CD4-positive, alpha-beta T cell (primary cell): ENCODE measurements at regions of chr6 and their contacts with region 1.

Region 1: DNA sequence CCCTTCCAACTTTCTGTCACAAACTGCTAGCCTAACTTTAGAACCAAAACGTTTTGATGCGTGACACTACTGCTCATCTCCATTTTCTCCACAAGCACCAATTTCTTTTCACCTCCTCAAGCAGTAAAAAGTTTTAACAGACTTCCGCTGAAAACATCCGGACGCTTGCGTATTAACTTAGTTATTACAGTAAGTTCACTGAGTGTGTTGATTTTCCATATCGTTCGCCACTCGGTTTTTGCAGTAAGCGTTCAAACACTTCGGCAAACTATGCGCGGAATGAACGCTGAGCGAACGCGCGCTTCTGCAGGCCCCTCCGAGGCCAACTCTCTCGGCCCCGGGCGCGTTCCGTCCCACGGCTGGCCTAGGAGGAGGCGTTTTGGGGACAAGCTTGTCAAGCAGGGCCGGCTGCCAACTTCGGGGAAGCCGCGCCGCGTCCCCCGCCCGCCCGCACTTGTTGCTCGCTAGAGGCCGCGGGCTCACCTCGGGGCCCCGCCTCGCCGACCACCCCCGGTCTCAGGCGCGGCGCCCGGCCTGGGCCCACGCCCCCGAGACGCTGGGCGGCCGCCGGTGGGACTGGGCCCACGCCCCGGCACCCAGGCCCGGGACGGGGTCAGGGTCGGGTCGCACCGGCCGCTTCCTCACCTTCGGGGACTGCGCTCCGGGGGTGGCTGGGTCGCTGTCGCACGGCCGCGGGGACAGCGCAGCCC is 945 bp downstream of the PHF10 start:
- DNase-seq: peak; percentile 47 to 85 (median 64)
- ATAC-seq: peak; percentile 38
- H3K4me3 ChIP-seq: peak overlapping the region; percentile 79
- H3K4me3 Mint-ChIP-seq: peak overlapping the region; percentile 90
- H3K27ac ChIP-seq: peak overlapping the region; percentile 66 to 81
- H3K27ac Mint-ChIP-seq: peak overlapping the region; percentile 94
- H3K4me1 ChIP-seq: peaks cover 17% of the 10 kb centered on the region
- H3K4me1 Mint-ChIP-seq: peaks cover 58% of the 10 kb centered on the region
- H3K27me3 ChIP-seq: no peaks in the 10 kb centered on the region
- H3K27me3 Mint-ChIP-seq: no peaks in the 10 kb centered on the region
- CTCF ChIP-seq: no peak

Region 2: GRCh38 chr6:169709293-169709692 is 14.1 kb before region 1 on chr6:
- CTCF ChIA-PET with region 1: interaction called, 29 read pairs
- POLR2A ChIA-PET with region 1: interaction called, 230 read pairs
- intact Hi-C with region 1: no loop called
- DNase-seq: no peak
- ATAC-seq: no peak
- H3K4me3 ChIP-seq: no peak overlapping the region
- H3K4me3 Mint-ChIP-seq: no peak overlapping the region
- H3K27ac ChIP-seq: peak overlapping the region in 1 of 2 donors; percentile 6
- H3K27ac Mint-ChIP-seq: no peak overlapping the region
- H3K4me1 ChIP-seq: no peaks in the 10 kb centered on the region
- H3K4me1 Mint-ChIP-seq: peaks cover 34% of the 10 kb centered on the region
- H3K27me3 ChIP-seq: no peaks in the 10 kb centered on the region
- H3K27me3 Mint-ChIP-seq: no peaks in the 10 kb centered on the region
- CTCF ChIP-seq: no peak

Region 3: DNA sequence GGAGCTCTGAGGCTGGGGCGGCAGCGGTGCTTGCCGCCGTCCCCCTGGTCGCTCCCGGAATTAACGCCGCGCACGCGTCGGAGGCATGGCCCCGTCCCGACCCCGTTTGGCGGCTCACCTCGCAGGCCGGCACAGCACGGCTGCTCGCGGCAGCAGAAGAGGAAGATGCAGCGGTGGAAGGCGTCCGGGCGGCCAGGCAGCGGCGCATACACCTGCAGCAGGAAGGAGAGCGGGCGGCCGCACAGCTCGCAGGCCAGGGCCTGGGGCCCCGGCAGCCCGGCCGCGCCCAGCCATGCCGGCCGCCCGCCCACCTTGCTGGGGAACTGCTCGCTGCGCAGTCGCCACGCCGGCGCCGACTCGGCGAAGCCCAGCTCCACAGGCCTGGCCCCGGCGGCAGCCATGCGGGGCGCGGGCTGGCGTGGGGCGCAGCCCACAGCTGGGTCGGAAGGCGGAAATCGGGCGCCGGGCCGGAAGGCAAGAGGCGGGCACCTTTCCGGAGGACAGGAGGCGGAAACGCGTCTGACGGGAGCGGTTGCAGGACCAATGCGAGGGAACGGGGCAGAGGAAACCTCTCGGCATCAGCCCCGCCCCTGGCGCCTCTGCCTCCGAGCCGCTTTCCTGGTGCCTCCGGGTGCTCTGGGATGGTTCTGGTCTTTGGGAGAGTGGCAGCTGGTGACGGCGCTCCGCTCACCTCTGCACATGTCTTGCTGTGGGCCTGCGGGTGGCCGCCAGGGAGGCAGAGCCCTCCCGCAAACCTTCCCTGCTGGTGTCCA is 861.0 kb after region 1 on chr6 and contains the start of gene PDCD2:
- CTCF ChIA-PET with region 1: no interaction called
- POLR2A ChIA-PET with region 1: interaction called, 12 read pairs
- intact Hi-C with region 1: no loop called
- DNase-seq: peak; percentile 82 to 96 (median 88)
- ATAC-seq: peak; percentile 94
- H3K4me3 ChIP-seq: peak within 1 kb of the TSS; percentile 74
- H3K4me3 Mint-ChIP-seq: peak within 1 kb of the TSS; percentile 97
- H3K27ac ChIP-seq: peak within 1 kb of the TSS; percentile 69 to 92
- H3K27ac Mint-ChIP-seq: peak within 1 kb of the TSS; percentile 96
- H3K4me1 ChIP-seq: peaks cover 15% of the 10 kb centered on the region
- H3K4me1 Mint-ChIP-seq: peaks cover 38% of the 10 kb centered on the region
- H3K27me3 ChIP-seq: no peaks in the 10 kb centered on the region
- H3K27me3 Mint-ChIP-seq: no peaks in the 10 kb centered on the region
- CTCF ChIP-seq: no peak
- total RNA-seq, gene PDCD2: 56.9 to 57.1 TPM